Lower lobe of right lung (tissue), 2 donors: ENCODE measurements at regions of chr12 and their contacts with region 1.

Region 1: GRCh38 chr12:120649442-120650232 is 9.2 kb downstream of the CABP1 start:
- DNase-seq: peak; percentile 39
- ATAC-seq: no peak
- H3K4me3 ChIP-seq: peak overlapping the region; percentile 24
- H3K27ac ChIP-seq: no peak overlapping the region
- H3K4me1 ChIP-seq: peaks cover 15% of the 10 kb centered on the region
- H3K27me3 ChIP-seq: peaks cover 38% of the 10 kb centered on the region
- CTCF ChIP-seq: peak; percentile 5

Region 2: GRCh38 chr12:120719496-120720233 is 70.0 kb after region 1 on chr12:
- intact Hi-C with region 1: loop called (anchors 5 kb)
- DNase-seq: no peak
- ATAC-seq: no peak
- H3K4me3 ChIP-seq: no peak overlapping the region
- H3K27ac ChIP-seq: no peak overlapping the region
- H3K4me1 ChIP-seq: peaks cover 8% of the 10 kb centered on the region
- H3K27me3 ChIP-seq: no peaks in the 10 kb centered on the region
- CTCF ChIP-seq: no peak